CD4-positive, alpha-beta memory T cell (primary cell): ENCODE measurements at regions of chr5 and their contacts with region 1.

Region 1: GRCh38 chr5:80134879-80135278 is 99.7 kb downstream of the THBS4 start:
- DNase-seq: no peak
- H3K4me3 ChIP-seq: no peak overlapping the region
- H3K4me3 Mint-ChIP-seq: peak overlapping the region; percentile 7 to 87 (median 77)
- H3K27ac ChIP-seq: peak overlapping the region; percentile 54
- H3K27ac Mint-ChIP-seq: peak overlapping the region; percentile 69 to 97 (median 92)
- H3K4me1 ChIP-seq: peaks cover 86% of the 10 kb centered on the region
- H3K4me1 Mint-ChIP-seq: peaks cover 70 to 88% (median 80%) of the 10 kb centered on the region in 4 donors
- H3K27me3 ChIP-seq: no peaks in the 10 kb centered on the region
- H3K27me3 Mint-ChIP-seq: no peaks in the 10 kb centered on the region

Region 2: DNA sequence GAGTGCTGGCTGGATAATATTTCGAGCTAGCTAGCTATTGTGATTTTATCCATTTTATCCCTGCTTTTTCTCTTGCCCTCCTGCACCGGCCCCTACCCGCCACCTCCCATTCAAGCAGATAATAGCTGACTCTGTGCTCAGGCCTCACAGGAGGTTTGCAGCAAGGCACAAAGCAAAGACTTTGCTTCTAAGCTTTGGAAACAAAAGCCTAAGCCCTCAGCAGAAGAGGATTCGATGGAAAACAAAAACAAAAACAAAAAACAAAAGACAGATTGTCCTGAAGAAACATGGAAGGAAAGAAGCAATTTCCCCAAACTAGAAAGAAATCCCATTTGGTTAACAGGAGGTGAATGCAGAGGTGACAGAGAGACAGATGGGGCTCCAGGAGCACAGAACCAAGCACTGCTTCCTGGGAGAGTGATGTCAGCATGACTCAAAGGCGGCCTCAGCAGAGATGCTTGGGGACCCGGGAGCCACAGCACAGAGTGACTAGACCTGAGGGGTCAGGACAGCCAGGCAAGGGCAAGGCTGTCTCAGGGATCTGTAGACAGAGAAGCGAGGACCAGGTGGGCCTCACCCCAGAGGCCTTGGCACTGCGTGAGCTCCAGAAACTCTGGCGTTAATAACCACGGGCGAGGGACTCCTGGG is 172.2 kb before region 1 on chr5:
- CTCF ChIA-PET with region 1: no interaction called
- POLR2A ChIA-PET with region 1: no interaction called
- intact Hi-C with region 1: no loop called
- DNase-seq: no peak
- H3K4me3 ChIP-seq: no peak overlapping the region
- H3K4me3 Mint-ChIP-seq: peak overlapping the region in 2 of 8 donors; percentile 9 to 18
- H3K27ac ChIP-seq: no peak overlapping the region
- H3K27ac Mint-ChIP-seq: no peak overlapping the region
- H3K4me1 ChIP-seq: no peaks in the 10 kb centered on the region
- H3K4me1 Mint-ChIP-seq: peaks cover 0 to 5% (median 4%) of the 10 kb centered on the region in 4 donors
- H3K27me3 ChIP-seq: no peaks in the 10 kb centered on the region
- H3K27me3 Mint-ChIP-seq: peaks cover 2 to 16% of the 10 kb centered on the region in 2 donors

Region 3: GRCh38 chr5:80117446-80117845 is 17.4 kb before region 1 on chr5:
- CTCF ChIA-PET with region 1: interaction called, 7 read pairs
- POLR2A ChIA-PET with region 1: interaction called, 37 read pairs
- intact Hi-C with region 1: no loop called
- DNase-seq: no peak
- H3K4me3 ChIP-seq: no peak overlapping the region
- H3K4me3 Mint-ChIP-seq: peak overlapping the region in 5 of 8 donors; percentile 25 to 76 (median 43)
- H3K27ac ChIP-seq: no peak overlapping the region
- H3K27ac Mint-ChIP-seq: peak overlapping the region in 5 of 7 donors; percentile 24 to 81 (median 65)
- H3K4me1 ChIP-seq: peaks cover 31% of the 10 kb centered on the region
- H3K4me1 Mint-ChIP-seq: peaks cover 47 to 62% (median 56%) of the 10 kb centered on the region in 4 donors
- H3K27me3 ChIP-seq: no peaks in the 10 kb centered on the region
- H3K27me3 Mint-ChIP-seq: no peaks in the 10 kb centered on the region

Region 4: DNA sequence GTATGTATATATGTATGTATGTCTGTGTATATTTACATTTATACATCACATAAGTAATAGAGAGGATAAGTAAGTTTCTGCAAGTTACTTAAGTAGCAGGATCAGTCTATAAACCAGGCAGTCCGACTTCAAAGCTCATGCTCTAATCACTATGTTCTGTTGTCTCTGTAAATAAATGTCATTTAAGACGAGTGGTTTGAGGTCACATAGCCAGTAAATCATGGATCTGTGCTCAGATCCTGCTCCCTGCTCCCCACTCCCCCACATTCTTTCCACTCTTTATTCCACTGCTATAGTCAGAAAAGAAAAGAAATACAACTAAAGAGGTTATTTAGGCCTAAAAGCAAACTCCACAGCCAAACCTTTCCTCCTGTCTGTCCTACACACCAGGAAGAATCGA is 30.6 kb after region 1 on chr5:
- CTCF ChIA-PET with region 1: no interaction called
- POLR2A ChIA-PET with region 1: interaction called, 11 read pairs
- intact Hi-C with region 1: no loop called
- DNase-seq: no peak
- H3K4me3 ChIP-seq: no peak overlapping the region
- H3K4me3 Mint-ChIP-seq: peak overlapping the region in 1 of 8 donors; percentile 34
- H3K27ac ChIP-seq: no peak overlapping the region
- H3K27ac Mint-ChIP-seq: peak overlapping the region in 6 of 7 donors; percentile 29 to 82 (median 60)
- H3K4me1 ChIP-seq: peaks cover 38% of the 10 kb centered on the region
- H3K4me1 Mint-ChIP-seq: peaks cover 36 to 65% (median 53%) of the 10 kb centered on the region in 4 donors
- H3K27me3 ChIP-seq: no peaks in the 10 kb centered on the region
- H3K27me3 Mint-ChIP-seq: no peaks in the 10 kb centered on the region

Region 5: GRCh38 chr5:80246001-80246758 is 111.3 kb after region 1 on chr5:
- CTCF ChIA-PET with region 1: interaction called, 5 read pairs
- POLR2A ChIA-PET with region 1: interaction called, 75 read pairs
- intact Hi-C with region 1: no loop called
- DNase-seq: no peak
- H3K4me3 ChIP-seq: no peak overlapping the region
- H3K4me3 Mint-ChIP-seq: peak overlapping the region in 7 of 8 donors; percentile 22 to 83 (median 65)
- H3K27ac ChIP-seq: peak overlapping the region; percentile 39
- H3K27ac Mint-ChIP-seq: peak overlapping the region; percentile 66 to 88 (median 86)
- H3K4me1 ChIP-seq: peaks cover 70% of the 10 kb centered on the region
- H3K4me1 Mint-ChIP-seq: peaks cover 51 to 84% (median 67%) of the 10 kb centered on the region in 4 donors
- H3K27me3 ChIP-seq: no peaks in the 10 kb centered on the region
- H3K27me3 Mint-ChIP-seq: no peaks in the 10 kb centered on the region